SK-N-SH (cell line): ENCODE measurements at regions of chr3 and their contacts with region 1.

Region 1: GRCh38 chr3:122942937-122943827 is 84.4 kb downstream of the SEMA5B start:
- DNase-seq: peak; percentile 91
- H3K4me3 ChIP-seq: no peak overlapping the region; a peak in 1 of 4 replicates
- H3K27ac ChIP-seq: no peak overlapping the region
- H3K4me1 ChIP-seq: peaks cover 10 to 20% of the 10 kb centered on the region in 2 experiments; a peak in 2 of 4 replicates
- H3K27me3 ChIP-seq: no peaks in the 10 kb centered on the region
- CTCF ChIP-seq: peak; percentile 95
- EP300 ChIP-seq: no peak
- RAD21 ChIP-seq: peak; percentile 92

Region 2: GRCh38 chr3:121970047-121970446 is 973.1 kb before region 1 on chr3:
- CTCF ChIA-PET with region 1: no interaction called
- POLR2A ChIA-PET with region 1: no interaction called
- DNase-seq: no peak
- H3K4me3 ChIP-seq: no peak overlapping the region
- H3K27ac ChIP-seq: no peak overlapping the region
- H3K4me1 ChIP-seq: no peaks in the 10 kb centered on the region
- H3K27me3 ChIP-seq: no peaks in the 10 kb centered on the region
- CTCF ChIP-seq: no peak
- EP300 ChIP-seq: no peak
- RAD21 ChIP-seq: no peak

Region 3: DNA sequence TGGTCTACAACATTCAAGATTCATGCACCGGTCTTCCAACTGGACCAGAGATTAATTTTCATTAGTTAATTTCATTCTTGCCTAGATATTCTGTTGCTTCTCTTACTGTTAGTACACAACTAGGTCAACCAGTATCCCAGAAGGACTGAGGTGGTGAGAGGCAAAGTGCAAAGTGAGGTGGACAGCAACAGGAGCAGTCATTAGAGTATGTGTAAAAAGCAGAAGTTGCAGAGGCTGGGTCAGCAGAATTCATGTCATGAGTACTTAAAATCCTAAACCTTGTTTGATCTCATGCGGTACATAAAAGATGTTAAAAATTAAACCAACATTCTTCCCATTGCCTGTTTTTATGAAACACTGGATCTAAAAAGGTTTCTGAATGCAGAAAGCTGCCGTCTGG is 215.9 kb before region 1 on chr3:
- CTCF ChIA-PET with region 1: no interaction called
- POLR2A ChIA-PET with region 1: no interaction called
- DNase-seq: no peak
- H3K4me3 ChIP-seq: no peak overlapping the region
- H3K27ac ChIP-seq: peak overlapping the region in 1 of 2 experiments; percentile 28; a peak in 1 of 4 replicates
- H3K4me1 ChIP-seq: peaks cover 0 to 6% of the 10 kb centered on the region in 2 experiments; a peak in 2 of 4 replicates
- H3K27me3 ChIP-seq: no peaks in the 10 kb centered on the region
- CTCF ChIP-seq: no peak
- EP300 ChIP-seq: no peak
- RAD21 ChIP-seq: no peak

Region 4: DNA sequence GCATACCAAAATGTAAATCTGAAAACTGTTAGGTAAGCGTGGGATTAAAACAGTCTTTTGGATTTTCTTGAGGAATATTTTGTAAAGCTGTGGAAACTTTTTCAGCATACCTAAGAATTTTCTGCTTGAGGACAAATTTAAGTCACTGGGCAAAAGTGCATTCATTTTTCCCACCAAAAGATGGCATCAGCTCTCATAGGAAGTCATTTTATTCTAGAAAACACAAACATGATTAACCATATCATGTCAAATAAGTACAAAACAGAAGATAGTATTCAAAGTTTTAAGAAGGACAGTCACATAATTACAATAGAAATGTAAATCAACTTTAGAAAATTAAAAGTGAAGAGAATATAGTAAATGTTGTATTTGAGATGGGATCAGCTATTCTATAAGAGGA is 84.8 kb before region 1 on chr3:
- CTCF ChIA-PET with region 1: interaction called, 17 read pairs
- POLR2A ChIA-PET with region 1: no interaction called
- DNase-seq: peak; percentile 17
- H3K4me3 ChIP-seq: no peak overlapping the region
- H3K27ac ChIP-seq: no peak overlapping the region
- H3K4me1 ChIP-seq: no peaks in the 10 kb centered on the region
- H3K27me3 ChIP-seq: no peaks in the 10 kb centered on the region
- CTCF ChIP-seq: peak; percentile 60
- EP300 ChIP-seq: no peak
- RAD21 ChIP-seq: peak; percentile 68

Region 5: DNA sequence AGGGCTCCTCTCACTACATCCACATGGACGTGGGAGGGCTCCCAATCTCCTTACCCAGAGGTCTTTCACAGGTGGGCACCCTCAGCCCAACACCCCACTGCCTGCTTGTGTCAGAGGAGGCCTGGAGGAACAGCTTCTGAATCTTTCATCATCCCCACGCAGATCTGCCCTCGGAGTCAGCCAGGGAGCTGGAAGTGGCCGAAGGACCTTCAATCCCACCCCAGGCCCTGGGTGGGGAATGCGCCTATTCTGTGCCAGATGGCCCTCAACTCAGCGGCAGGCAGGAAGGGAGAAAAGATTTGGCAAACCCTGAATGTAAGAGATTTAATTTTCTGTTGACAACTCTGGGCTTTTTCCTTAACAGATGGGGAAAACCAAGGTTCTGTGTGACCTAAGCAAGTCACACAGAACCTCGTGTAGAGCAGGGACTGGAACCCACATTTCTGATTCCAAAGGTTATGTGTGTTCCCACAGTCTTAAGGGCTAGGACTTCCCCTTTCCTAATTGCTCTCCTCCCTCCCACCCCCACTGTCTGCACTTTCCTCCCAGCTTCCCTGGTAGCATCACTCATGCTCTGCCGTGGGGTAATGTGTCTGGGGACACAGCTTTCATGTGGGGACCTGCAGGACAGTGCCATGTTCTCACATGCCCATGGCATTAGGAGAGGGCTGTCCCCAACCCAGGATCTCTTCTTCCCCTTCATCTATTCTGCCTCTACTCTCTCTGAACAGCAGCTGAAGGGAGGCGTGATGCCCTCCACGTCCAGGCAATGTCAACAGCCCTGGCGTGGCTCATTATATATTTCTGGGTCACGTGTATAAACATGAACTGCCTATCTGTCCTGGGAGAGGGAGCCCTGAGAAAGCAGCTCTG is 13.8 kb before region 1 on chr3:
- CTCF ChIA-PET with region 1: interaction called, 18 read pairs
- POLR2A ChIA-PET with region 1: no interaction called
- DNase-seq: peak; percentile 65
- H3K4me3 ChIP-seq: no peak overlapping the region
- H3K27ac ChIP-seq: peak overlapping the region in 1 of 2 experiments; percentile 59; a peak in 2 of 4 replicates
- H3K4me1 ChIP-seq: peaks cover 0 to 23% of the 10 kb centered on the region in 2 experiments; a peak in 1 of 4 replicates
- H3K27me3 ChIP-seq: no peaks in the 10 kb centered on the region
- CTCF ChIP-seq: no peak
- EP300 ChIP-seq: peak in 1 of 2 experiments; percentile 9; a peak in 1 of 4 replicates
- RAD21 ChIP-seq: no peak

Region 6: DNA sequence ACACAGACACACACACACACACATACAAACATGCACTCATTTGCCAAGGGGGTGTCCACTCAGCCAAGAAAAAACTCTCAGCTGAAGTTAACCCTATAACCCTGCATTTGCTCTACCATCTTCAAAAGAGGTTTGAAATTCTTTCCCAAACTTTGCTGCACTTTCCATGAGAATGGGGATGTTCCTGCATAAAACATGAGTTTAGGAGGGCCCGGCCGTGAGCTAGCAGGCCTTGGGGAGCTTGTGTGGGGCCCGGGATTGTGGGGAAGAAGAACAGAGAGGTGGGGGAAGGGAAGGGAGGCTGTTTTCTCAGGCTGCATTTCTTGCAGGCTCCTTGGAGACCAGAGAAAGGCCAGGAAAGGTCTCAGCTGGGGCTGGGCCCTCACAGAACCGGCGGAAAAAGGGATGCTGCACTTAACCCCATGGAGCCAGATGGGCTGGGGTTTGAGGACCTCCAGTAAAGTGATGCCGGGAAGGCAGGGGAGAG is 43.6 kb after region 1 on chr3:
- CTCF ChIA-PET with region 1: interaction called, 11 read pairs
- POLR2A ChIA-PET with region 1: no interaction called
- DNase-seq: no peak
- H3K4me3 ChIP-seq: no peak overlapping the region
- H3K27ac ChIP-seq: no peak overlapping the region
- H3K4me1 ChIP-seq: peaks cover 0 to 24% of the 10 kb centered on the region in 2 experiments; a peak in 1 of 4 replicates
- H3K27me3 ChIP-seq: no peaks in the 10 kb centered on the region; the same call in 1 of the 2 replicates
- CTCF ChIP-seq: no peak
- EP300 ChIP-seq: no peak
- RAD21 ChIP-seq: no peak

Region 7: DNA sequence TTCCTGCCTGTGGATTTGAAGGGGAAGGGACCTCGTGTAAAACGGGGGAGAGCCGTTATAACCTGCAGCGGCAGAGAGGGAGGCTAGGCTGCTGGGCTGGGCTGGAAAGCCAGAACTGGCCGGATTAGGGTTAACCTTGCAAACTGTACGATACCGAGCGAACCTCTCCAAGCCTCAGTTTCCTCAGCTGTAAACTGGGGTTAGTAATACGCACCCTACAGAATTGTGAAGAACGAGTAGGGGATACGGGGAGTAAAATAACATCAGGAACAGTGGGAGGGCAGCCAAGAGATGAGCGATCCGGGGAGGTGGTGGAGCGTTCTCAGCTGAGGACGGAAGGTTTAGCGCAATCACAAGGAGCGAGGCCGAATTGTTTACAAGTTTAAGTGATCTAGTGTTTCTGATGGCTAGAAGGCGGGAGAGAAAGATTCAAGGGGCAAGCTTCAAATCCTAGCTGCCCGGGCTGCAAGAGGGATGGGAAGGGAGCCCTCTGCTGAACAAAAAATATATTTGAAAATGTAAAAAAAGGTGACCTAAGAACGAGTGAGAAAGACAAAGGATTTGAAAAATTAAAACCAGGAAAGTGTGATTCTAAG is 85.1 kb after region 1 on chr3:
- CTCF ChIA-PET with region 1: interaction called, 342 read pairs
- POLR2A ChIA-PET with region 1: interaction called, 3 read pairs
- DNase-seq: peak; percentile 79
- H3K4me3 ChIP-seq: peak overlapping the region; percentile 50 to 63
- H3K27ac ChIP-seq: no peak overlapping the region
- H3K4me1 ChIP-seq: peaks cover 0 to 23% of the 10 kb centered on the region in 2 experiments; a peak in 2 of 4 replicates
- H3K27me3 ChIP-seq: peaks cover 45% of the 10 kb centered on the region
- CTCF ChIP-seq: peak; percentile 76
- EP300 ChIP-seq: no peak
- RAD21 ChIP-seq: peak; percentile 92